Activated T-helper 1 cell treated with anti-CD3 and anti-CD28 coated beads, Interleukin-12 subunit alpha, Interleukin-12 subunit beta, Interleukin-2, Interleukin-4 antibody, amounts not matched to agents 30 ng/mL and 10 ng/mL and 1 ng/mL, durations not matched to agents 14 hours and 24 hours and 36 hours (primary cell): ENCODE measurements at regions of chr5 and their contacts with region 1.

Region 1: DNA sequence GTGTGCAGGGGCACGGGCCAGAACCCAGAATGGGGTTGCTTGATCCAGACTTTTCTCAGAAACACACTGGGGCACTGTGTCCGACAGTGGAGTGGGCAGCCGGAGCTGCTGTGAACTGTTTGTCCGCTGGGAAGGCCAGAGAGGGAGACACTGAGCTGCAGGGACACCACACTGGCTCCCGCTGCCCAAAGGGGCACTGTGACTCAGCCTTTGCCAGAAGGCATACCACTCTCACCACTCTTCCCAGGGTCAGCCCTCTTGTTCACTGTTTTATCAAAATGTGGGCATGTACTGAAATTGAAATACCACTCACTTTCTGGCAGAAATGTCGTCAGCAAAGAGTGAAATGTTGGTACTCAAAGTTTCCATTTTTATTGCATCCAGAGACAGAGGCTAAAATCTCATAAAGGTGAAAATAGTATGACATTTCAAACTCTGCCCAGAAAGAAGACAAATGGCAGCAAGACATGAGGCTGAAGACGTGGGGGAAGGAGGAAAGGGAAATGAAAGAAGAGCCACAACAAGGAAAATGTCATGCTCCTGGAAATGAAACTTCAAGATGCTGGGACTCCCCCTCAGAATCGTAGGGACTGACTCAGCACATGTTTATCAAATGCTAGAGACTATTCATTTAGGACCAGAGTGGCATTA is 4.5 kb upstream of the IL7R start:
- DNase-seq: peak; percentile 45
- H3K4me3 Mint-ChIP-seq: peak overlapping the region; percentile 90
- H3K27ac Mint-ChIP-seq: peak overlapping the region; percentile 96
- H3K4me1 Mint-ChIP-seq: peaks cover 72% of the 10 kb centered on the region
- H3K27me3 Mint-ChIP-seq: no peaks in the 10 kb centered on the region

Region 2: DNA sequence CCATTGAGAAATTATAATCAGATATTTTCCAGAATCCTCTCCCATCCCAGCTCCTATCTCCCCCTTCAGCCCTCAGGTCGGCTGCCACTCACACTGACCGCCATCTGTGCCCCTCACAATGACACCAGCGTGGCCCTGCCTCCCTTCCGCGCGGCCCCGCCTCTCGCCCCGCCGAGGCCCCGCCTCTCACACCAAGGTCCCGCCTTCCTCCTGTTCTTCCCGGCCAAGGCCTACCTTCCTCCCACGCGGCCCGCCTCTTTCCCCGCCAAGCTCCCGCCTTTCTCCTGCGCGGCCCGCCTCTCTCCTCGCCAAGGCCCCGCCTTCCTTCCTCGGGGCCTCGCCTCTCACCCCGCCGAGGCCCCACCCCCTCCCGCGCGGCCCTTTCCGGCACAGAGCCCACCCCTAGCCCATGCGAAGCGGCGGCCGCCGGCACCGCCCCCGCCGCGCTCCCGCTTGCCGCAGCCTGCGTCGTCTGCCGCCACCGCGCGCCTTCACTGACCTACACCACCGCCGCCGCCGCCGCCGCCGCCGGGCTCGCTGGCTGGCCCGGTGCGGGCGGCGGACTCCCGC is 923.0 kb before region 1 on chr5 and contains the start of gene DNAJC21:
- intact Hi-C with region 1: loop called (anchors 10 kb)
- DNase-seq: peak; percentile 97
- H3K4me3 Mint-ChIP-seq: peak within 1 kb of the TSS; percentile 98
- H3K27ac Mint-ChIP-seq: peak within 1 kb of the TSS; percentile 95
- H3K4me1 Mint-ChIP-seq: peaks cover 45% of the 10 kb centered on the region
- H3K27me3 Mint-ChIP-seq: no peaks in the 10 kb centered on the region
- total RNA-seq, gene DNAJC21: 64.0 and 67.8 TPM in 2 replicates

Region 3: DNA sequence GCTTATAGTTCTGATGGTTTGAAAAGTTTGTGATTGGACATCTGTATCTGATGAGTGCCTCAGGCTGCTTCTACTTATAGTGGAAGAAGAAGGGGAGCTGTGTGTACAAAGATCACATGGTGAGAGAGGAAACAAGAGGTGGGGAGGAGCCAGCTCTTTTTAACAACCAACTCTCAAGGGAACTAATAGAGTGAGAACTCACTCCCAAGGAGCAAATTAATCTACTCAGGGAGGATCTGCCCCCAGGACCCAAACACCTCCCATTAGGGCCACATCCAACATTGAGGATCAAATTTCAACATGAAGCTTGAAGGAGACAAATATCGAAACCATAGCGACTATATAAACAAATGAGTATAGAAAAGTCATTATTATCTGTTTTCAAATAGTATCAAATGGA is 557.2 kb before region 1 on chr5:
- intact Hi-C with region 1: no loop called
- DNase-seq: no peak
- H3K4me3 Mint-ChIP-seq: no peak overlapping the region
- H3K27ac Mint-ChIP-seq: no peak overlapping the region
- H3K4me1 Mint-ChIP-seq: no peaks in the 10 kb centered on the region
- H3K27me3 Mint-ChIP-seq: peaks cover 2% of the 10 kb centered on the region

Region 4: GRCh38 chr5:35672995-35673394 is 179.2 kb before region 1 on chr5:
- intact Hi-C with region 1: loop called (anchors 1 kb)
- DNase-seq: peak; percentile 29
- H3K4me3 Mint-ChIP-seq: peak overlapping the region; percentile 10
- H3K27ac Mint-ChIP-seq: peak overlapping the region; percentile 59
- H3K4me1 Mint-ChIP-seq: peaks cover 65% of the 10 kb centered on the region
- H3K27me3 Mint-ChIP-seq: no peaks in the 10 kb centered on the region

Region 5: DNA sequence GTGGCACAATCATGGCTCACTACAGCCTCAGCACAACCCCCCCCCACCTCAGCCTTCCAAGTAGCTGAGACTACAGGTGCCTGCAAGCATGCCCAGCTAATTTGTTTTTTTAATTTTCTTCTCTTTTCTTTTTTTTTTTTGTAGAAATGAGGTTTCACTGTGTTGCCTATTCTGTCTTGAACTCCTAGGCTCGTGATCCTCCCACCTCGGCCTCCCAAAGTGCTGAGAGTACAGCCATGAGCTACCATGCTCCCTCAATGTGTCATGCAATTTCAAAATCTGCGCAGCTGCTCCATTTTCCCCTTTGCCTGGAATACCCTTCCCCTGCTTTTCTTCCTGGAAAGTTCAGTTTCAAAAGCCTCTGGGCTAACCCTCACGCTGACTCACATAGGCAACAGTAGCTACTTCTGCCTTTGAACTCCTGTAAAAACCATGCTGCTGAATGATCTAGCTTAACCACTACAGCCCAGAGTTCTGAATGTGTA is 66.6 kb before region 1 on chr5:
- intact Hi-C with region 1: loop called (anchors 1 kb)
- DNase-seq: peak; percentile 30
- H3K4me3 Mint-ChIP-seq: peak overlapping the region; percentile 24
- H3K27ac Mint-ChIP-seq: peak overlapping the region; percentile 86
- H3K4me1 Mint-ChIP-seq: peaks cover 90% of the 10 kb centered on the region
- H3K27me3 Mint-ChIP-seq: no peaks in the 10 kb centered on the region

Region 6: GRCh38 chr5:35830587-35830986 is 21.6 kb before region 1 on chr5:
- intact Hi-C with region 1: loop called (anchors 2 kb)
- DNase-seq: no peak
- H3K4me3 Mint-ChIP-seq: peak overlapping the region; percentile 43
- H3K27ac Mint-ChIP-seq: peak overlapping the region; percentile 82
- H3K4me1 Mint-ChIP-seq: peaks cover 86% of the 10 kb centered on the region
- H3K27me3 Mint-ChIP-seq: no peaks in the 10 kb centered on the region

Region 7: GRCh38 chr5:35919191-35919590 is 67.0 kb after region 1 on chr5:
- intact Hi-C with region 1: loop called (anchors 1 kb)
- DNase-seq: no peak
- H3K4me3 Mint-ChIP-seq: no peak overlapping the region
- H3K27ac Mint-ChIP-seq: peak overlapping the region; percentile 81
- H3K4me1 Mint-ChIP-seq: peaks cover 35% of the 10 kb centered on the region
- H3K27me3 Mint-ChIP-seq: peaks cover 3% of the 10 kb centered on the region

Region 8: GRCh38 chr5:36552626-36553393 is 700.6 kb after region 1 on chr5:
- intact Hi-C with region 1: no loop called
- DNase-seq: no peak
- H3K4me3 Mint-ChIP-seq: no peak overlapping the region
- H3K27ac Mint-ChIP-seq: no peak overlapping the region
- H3K4me1 Mint-ChIP-seq: no peaks in the 10 kb centered on the region
- H3K27me3 Mint-ChIP-seq: peaks cover 2% of the 10 kb centered on the region

Region 9: DNA sequence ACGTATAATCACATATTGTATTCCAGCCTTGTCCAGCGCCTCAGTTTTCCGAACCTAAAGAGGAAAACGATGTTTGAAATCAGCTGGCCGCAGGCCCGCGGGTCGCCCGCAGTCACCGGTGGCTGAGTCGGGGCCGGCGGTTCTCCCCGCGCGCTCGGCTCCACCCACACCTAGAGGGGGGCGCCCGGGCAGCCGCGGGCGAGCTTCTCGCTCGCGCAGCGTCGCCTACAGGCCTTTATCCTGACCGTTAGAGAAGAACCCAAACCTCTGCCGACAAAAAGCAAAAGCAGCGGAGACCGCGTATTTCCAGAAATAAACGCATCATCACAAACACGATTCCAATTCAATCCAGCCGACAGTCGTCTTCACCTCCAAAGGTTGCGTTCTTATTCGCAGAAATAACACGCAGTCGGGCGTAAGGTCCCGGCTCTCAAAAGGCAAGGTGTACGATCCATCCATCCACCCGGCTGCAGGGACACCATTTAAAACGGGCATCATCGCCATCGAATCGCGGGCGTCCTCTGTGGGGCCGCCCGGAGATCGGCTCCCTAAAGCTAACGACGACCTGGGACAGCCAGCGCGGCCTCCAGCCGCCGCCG is 1023.7 kb after region 1 on chr5:
- intact Hi-C with region 1: loop called (anchors 5 kb)
- DNase-seq: peak; percentile 72
- H3K4me3 Mint-ChIP-seq: peak overlapping the region; percentile 93
- H3K27ac Mint-ChIP-seq: peak overlapping the region; percentile 97
- H3K4me1 Mint-ChIP-seq: peaks cover 55% of the 10 kb centered on the region
- H3K27me3 Mint-ChIP-seq: peaks cover 2% of the 10 kb centered on the region